ENCODE measurements at regions of chr13 and their contacts with region 1.

Region 1: GRCh38 chr13:110225609-110226562 is 81.1 kb downstream of the COL4A1 start:
- DNase-seq: peak in 1 of 2 experiments; percentile 45
- H3K4me3 ChIP-seq: no peak overlapping the region
- H3K4me3 Mint-ChIP-seq: no peak overlapping the region
- H3K27ac Mint-ChIP-seq: peak overlapping the region; percentile 40
- H3K4me1 ChIP-seq: peaks cover 32% of the 10 kb centered on the region
- H3K4me1 Mint-ChIP-seq: peaks cover 22% of the 10 kb centered on the region
- H3K27me3 ChIP-seq: no peaks in the 10 kb centered on the region
- H3K27me3 Mint-ChIP-seq: no peaks in the 10 kb centered on the region
- CTCF ChIP-seq: no peak

Region 2: GRCh38 chr13:110262508-110263291 is 36.8 kb after region 1 on chr13:
- CTCF ChIA-PET with region 1: no interaction called
- POLR2A ChIA-PET with region 1: no interaction called
- intact Hi-C with region 1: loop called (anchors 5 kb)
- DNase-seq: no peak
- H3K4me3 ChIP-seq: no peak overlapping the region
- H3K4me3 Mint-ChIP-seq: peak overlapping the region; percentile 14
- H3K27ac Mint-ChIP-seq: peak overlapping the region; percentile 52
- H3K4me1 ChIP-seq: peaks cover 38% of the 10 kb centered on the region
- H3K4me1 Mint-ChIP-seq: peaks cover 31% of the 10 kb centered on the region
- H3K27me3 ChIP-seq: no peaks in the 10 kb centered on the region
- H3K27me3 Mint-ChIP-seq: no peaks in the 10 kb centered on the region
- CTCF ChIP-seq: no peak

Region 3: GRCh38 chr13:110312339-110313031 is 86.6 kb after region 1 on chr13:
- CTCF ChIA-PET with region 1: no interaction called
- POLR2A ChIA-PET with region 1: no interaction called
- intact Hi-C with region 1: loop called (anchors 1 kb)
- DNase-seq: peak; percentile 91 to 95
- H3K4me3 ChIP-seq: no peak overlapping the region
- H3K4me3 Mint-ChIP-seq: peak overlapping the region; percentile 3
- H3K27ac Mint-ChIP-seq: peak overlapping the region; percentile 76
- H3K4me1 ChIP-seq: peaks cover 64% of the 10 kb centered on the region
- H3K4me1 Mint-ChIP-seq: peaks cover 34% of the 10 kb centered on the region
- H3K27me3 ChIP-seq: no peaks in the 10 kb centered on the region
- H3K27me3 Mint-ChIP-seq: no peaks in the 10 kb centered on the region
- CTCF ChIP-seq: peak in 1 of 2 experiments; percentile 5

Region 4: GRCh38 chr13:110412132-110412914 is 186.4 kb after region 1 on chr13:
- CTCF ChIA-PET with region 1: interaction called, 6 read pairs
- POLR2A ChIA-PET with region 1: no interaction called
- intact Hi-C with region 1: loop called (anchors 1 kb)
- DNase-seq: peak; percentile 80 to 88
- H3K4me3 ChIP-seq: no peak overlapping the region
- H3K4me3 Mint-ChIP-seq: no peak overlapping the region
- H3K27ac Mint-ChIP-seq: peak overlapping the region; percentile 83
- H3K4me1 ChIP-seq: peaks cover 13% of the 10 kb centered on the region
- H3K4me1 Mint-ChIP-seq: peaks cover 12% of the 10 kb centered on the region
- H3K27me3 ChIP-seq: no peaks in the 10 kb centered on the region
- H3K27me3 Mint-ChIP-seq: no peaks in the 10 kb centered on the region
- CTCF ChIP-seq: peak; percentile 94

Region 5: DNA sequence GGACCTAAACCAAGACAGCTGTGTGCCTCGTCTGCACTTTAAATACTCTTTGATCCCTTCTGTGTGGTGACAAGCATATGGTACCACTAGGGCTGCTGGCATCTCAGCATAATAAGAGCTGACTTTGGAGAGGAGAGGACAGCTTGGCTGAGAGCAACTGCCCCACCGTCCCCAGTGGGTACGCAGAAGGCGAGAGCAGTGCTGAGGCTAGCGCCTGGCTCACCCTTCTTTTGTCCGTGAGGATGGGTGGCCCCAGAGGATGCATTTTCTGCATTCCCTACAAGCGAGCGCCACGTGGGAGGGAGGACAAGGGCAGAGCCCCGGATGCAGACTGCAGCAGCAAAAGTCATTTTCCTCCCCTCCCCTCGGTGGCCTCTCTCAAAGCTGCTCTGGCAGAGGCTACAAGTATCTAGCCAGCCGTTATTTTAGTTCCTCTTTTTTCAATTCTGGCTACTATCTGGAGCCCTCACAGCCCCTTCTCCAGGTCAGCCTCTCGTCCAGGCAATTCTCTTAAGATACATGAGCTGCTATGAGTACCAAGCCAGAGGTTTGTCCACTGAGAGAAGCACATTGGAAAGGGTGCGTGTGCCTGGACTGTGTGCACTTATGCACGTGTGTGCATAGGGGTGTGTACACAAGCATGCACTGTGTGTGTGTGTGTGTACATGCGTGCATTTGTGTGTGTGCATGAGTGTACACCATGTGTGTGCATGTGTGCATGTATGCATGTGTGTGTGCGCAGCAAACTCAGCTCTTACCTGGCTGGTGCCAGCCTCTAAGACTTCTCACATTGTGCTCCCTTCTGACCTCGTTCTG is 284.3 kb after region 1 on chr13:
- CTCF ChIA-PET with region 1: no interaction called
- POLR2A ChIA-PET with region 1: no interaction called
- intact Hi-C with region 1: loop called (anchors 2 kb)
- DNase-seq: peak in 1 of 2 experiments; percentile 37
- H3K4me3 ChIP-seq: no peak overlapping the region
- H3K4me3 Mint-ChIP-seq: no peak overlapping the region
- H3K27ac Mint-ChIP-seq: peak overlapping the region; percentile 69
- H3K4me1 ChIP-seq: peaks cover 53% of the 10 kb centered on the region
- H3K4me1 Mint-ChIP-seq: peaks cover 43% of the 10 kb centered on the region
- H3K27me3 ChIP-seq: no peaks in the 10 kb centered on the region
- H3K27me3 Mint-ChIP-seq: no peaks in the 10 kb centered on the region
- CTCF ChIP-seq: no peak

Region 6: GRCh38 chr13:110819203-110820014 is 593.5 kb after region 1 on chr13:
- CTCF ChIA-PET with region 1: no interaction called
- POLR2A ChIA-PET with region 1: no interaction called
- intact Hi-C with region 1: loop called (anchors 1 kb)
- DNase-seq: peak; percentile 72 to 85
- H3K4me3 ChIP-seq: no peak overlapping the region
- H3K4me3 Mint-ChIP-seq: no peak overlapping the region
- H3K27ac Mint-ChIP-seq: no peak overlapping the region
- H3K4me1 ChIP-seq: 0 out of 2 replicates have a peak, but pooled peaks cover 4% of the 10 kb centered on the region
- H3K4me1 Mint-ChIP-seq: no peaks in the 10 kb centered on the region
- H3K27me3 ChIP-seq: no peaks in the 10 kb centered on the region
- H3K27me3 Mint-ChIP-seq: no peaks in the 10 kb centered on the region
- CTCF ChIP-seq: peak; percentile 95 to 96

Measured in Caco-2 (cell line).